ENCODE measurements at regions of chrX and their contacts with region 1.

Region 1: GRCh38 chrX:27186664-27187063 is 276.5 kb downstream of the PPP4R3C start:
- DNase-seq: no peak
- H3K4me3 ChIP-seq: no peak overlapping the region
- H3K27ac ChIP-seq: no peak overlapping the region
- H3K4me1 ChIP-seq: no peaks in the 10 kb centered on the region
- H3K27me3 ChIP-seq: no peaks in the 10 kb centered on the region
- CTCF ChIP-seq: peak in 2 of 4 experiments; percentile 45 to 59
- EP300 ChIP-seq: no peak
- POLR2A ChIP-seq: no peak

Region 2: DNA sequence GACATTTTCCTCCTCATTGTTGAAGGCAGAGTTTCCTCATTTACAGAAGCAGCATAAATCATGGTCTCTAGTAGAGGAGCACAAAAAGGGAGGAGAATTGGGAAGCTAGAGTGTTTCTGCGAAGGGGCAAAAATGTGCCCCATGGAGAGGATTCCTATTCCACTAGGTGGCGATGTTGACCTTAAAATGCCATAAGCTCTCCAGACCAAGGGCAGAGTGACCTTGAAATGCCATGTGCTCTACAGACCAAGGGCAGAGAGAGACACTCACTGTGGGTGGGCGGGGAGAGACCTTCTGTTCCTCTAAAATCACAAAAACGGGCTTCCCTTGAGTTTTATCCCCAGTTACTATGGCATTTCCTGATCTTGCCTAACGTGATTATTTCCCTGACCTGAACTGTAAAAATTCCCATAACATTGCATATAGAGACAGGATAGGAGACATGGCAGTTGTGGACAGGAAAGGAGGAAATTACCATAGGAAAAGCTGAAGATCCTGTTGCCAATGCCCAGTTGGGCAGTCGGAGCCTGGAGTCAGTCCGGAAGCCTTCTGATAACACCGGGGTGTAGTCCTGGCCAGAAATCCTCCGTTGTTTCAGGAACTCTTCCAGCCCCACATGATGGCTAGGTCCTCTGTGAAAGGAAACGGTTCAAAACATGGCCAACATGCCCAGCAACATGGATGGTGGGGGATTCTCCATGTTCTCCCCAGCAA is 403.0 kb before region 1 on chrX:
- intact Hi-C with region 1: loop called (anchors 10 kb)
- DNase-seq: no peak
- H3K4me3 ChIP-seq: no peak overlapping the region
- H3K27ac ChIP-seq: no peak overlapping the region
- H3K4me1 ChIP-seq: no peaks in the 10 kb centered on the region
- H3K27me3 ChIP-seq: no peaks in the 10 kb centered on the region
- CTCF ChIP-seq: no peak
- EP300 ChIP-seq: no peak
- POLR2A ChIP-seq: no peak